SK-N-SH (cell line): ENCODE measurements at regions of chr3 and their contacts with region 1.

Region 1: DNA sequence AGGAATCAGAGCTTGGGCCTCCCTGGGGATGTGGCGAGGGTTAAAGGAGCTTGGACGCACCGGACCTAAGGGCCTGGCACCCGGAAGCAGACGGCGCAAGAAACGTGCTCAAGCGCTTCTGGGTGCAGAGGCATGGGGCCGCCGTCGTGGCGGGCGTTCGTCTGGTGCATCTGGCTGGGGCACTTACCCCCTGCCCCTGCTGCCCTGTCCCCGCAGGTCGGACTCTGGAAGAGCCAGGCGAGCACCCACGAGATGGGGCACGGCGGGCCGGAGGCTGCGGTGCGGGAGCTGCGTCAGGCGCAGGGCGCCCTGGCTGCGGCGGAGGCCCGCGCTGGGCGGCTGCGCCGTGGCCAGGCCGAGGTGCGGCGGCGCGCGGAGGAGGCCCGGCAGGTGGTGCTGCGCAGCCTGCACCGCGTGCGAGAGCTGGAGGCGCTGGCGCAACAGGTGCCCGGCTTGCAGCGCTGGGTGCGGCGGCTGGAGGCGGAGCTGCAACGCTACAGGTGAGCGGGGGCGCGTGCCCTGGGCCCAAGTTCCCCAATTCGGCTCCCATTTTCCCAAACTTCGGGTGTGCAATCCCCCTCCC is 2.6 kb downstream of the EFCC1 start:
- DNase-seq: peak; percentile 80
- H3K4me3 ChIP-seq: peak overlapping the region in 1 of 2 experiments; percentile 27; a peak in 1 of 4 replicates
- H3K27ac ChIP-seq: no peak overlapping the region
- H3K4me1 ChIP-seq: peaks cover 0 to 2% of the 10 kb centered on the region in 2 experiments; a peak in 1 of 4 replicates
- H3K27me3 ChIP-seq: peaks cover 49% of the 10 kb centered on the region
- CTCF ChIP-seq: no peak
- EP300 ChIP-seq: no peak
- RAD21 ChIP-seq: peak; percentile 28; the same call in 1 of the 2 replicates

Region 2: GRCh38 chr3:128686465-128686864 is 317.2 kb before region 1 on chr3:
- CTCF ChIA-PET with region 1: no interaction called
- POLR2A ChIA-PET with region 1: no interaction called
- DNase-seq: no peak
- H3K4me3 ChIP-seq: no peak overlapping the region
- H3K27ac ChIP-seq: no peak overlapping the region
- H3K4me1 ChIP-seq: peaks cover 2 to 4% of the 10 kb centered on the region in 2 experiments; a peak in 2 of 4 replicates
- H3K27me3 ChIP-seq: no peaks in the 10 kb centered on the region
- CTCF ChIP-seq: no peak
- EP300 ChIP-seq: no peak
- RAD21 ChIP-seq: no peak

Region 3: DNA sequence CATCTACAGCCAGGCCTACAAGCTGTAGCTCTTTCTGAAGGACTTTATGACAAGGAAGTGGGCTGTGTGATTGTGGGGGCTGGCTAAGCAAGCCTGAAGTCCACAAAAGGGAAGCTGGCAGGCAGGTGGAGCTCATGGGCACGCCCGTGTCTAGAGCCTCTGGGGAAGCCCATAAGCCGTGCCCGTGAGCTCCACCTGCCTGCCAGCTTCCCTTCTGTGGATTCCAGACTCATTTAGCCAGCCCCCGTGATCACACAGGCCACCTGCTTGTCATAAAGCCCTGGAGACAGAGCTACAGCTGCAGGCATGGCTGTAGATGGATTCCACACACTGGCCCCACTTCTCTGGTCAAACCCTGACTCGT is 12.7 kb after region 1 on chr3:
- CTCF ChIA-PET with region 1: interaction called, 13 read pairs
- POLR2A ChIA-PET with region 1: no interaction called
- DNase-seq: no peak
- H3K4me3 ChIP-seq: no peak overlapping the region
- H3K27ac ChIP-seq: no peak overlapping the region; a peak in 1 of 4 replicates
- H3K4me1 ChIP-seq: peaks cover 0 to 13% of the 10 kb centered on the region in 2 experiments; a peak in 1 of 4 replicates
- H3K27me3 ChIP-seq: no peaks in the 10 kb centered on the region
- CTCF ChIP-seq: no peak
- EP300 ChIP-seq: no peak
- RAD21 ChIP-seq: no peak